ENCODE measurements at regions of chr1 and their contacts with region 1.

Region 1: DNA sequence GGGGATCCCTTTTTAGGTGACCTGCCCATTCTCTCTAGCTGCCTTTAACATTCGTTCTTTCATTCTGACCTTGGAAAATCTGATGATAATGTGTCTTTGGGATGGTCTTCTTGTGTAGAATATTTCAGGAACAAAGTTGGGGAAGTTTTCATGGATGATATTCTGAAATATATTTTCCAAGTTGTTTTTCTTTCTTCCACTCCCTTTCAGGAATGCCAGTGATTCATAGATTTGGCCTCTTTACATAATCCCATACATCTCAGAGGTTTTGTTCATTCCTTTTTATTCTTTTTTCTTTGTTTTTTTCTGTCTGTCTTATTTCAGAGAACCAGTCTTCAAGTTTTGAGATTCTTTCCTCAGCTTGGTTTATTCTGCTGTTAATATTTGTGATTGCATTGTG is 13.9 kb upstream of the SCMH1 start:
- DNase-seq: no peak
- ATAC-seq: no peak
- H3K4me3 ChIP-seq: no peak overlapping the region
- H3K27ac ChIP-seq: peak overlapping the region in 1 of 2 experiments; percentile 31; a peak in 1 of 6 replicates
- H3K4me1 ChIP-seq: 0 out of 3 replicates have a peak, but pooled peaks cover 6% of the 10 kb centered on the region
- CTCF ChIP-seq: no peak
- EP300 ChIP-seq: no peak
- POLR2A ChIP-seq: no peak
- RAD21 ChIP-seq: no peak

Region 2: DNA sequence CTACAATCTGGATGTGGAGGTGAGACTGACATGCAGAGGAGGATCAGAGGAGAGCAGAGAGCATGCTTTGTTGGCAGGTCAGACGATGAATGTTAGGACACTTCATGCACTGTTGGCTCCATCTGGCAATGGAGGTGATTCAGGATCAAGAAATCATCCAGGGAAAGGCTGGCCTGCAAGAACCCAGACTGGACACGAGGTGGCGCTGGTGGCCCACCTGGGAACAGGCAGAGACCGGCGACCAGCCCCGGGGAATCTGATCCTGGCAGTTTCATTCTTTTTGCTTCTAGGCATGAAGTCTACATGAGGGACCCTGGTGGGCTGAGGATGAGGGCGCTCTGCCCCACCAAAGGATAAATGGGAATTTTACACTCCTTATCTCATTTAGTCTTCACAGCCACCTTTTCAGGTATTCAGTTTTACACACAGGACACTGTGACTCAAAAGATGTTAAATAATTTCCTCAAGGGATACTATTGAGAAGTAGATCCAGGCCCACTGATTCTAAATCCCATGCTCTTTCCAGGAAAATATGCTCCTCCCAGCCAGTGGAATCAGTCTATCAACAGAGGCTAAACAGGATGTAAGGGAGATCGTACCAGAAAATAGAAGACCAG is 12.3 kb after region 1 on chr1:
- CTCF ChIA-PET with region 1: interaction called, 12 read pairs
- POLR2A ChIA-PET with region 1: no interaction called
- DNase-seq: peak; percentile 64 to 77
- ATAC-seq: peak; percentile 67 to 94
- H3K4me3 ChIP-seq: no peak overlapping the region
- H3K27ac ChIP-seq: peak overlapping the region; percentile 34 to 48; a peak in 2 of 6 replicates
- H3K4me1 ChIP-seq: peaks cover 3% of the 10 kb centered on the region; the same call in 1 of the 3 replicates
- CTCF ChIP-seq: peak; percentile 84
- EP300 ChIP-seq: no peak
- POLR2A ChIP-seq: no peak
- RAD21 ChIP-seq: peak; percentile 90 to 91

Region 3: GRCh38 chr1:41427536-41428287 is 171.7 kb after region 1 on chr1:
- CTCF ChIA-PET with region 1: no interaction called
- POLR2A ChIA-PET with region 1: no interaction called
- DNase-seq: no peak
- ATAC-seq: no peak
- H3K4me3 ChIP-seq: no peak overlapping the region
- H3K27ac ChIP-seq: no peak overlapping the region
- H3K4me1 ChIP-seq: peaks cover 11% of the 10 kb centered on the region
- CTCF ChIP-seq: no peak
- EP300 ChIP-seq: no peak
- POLR2A ChIP-seq: no peak
- RAD21 ChIP-seq: no peak

Region 4: DNA sequence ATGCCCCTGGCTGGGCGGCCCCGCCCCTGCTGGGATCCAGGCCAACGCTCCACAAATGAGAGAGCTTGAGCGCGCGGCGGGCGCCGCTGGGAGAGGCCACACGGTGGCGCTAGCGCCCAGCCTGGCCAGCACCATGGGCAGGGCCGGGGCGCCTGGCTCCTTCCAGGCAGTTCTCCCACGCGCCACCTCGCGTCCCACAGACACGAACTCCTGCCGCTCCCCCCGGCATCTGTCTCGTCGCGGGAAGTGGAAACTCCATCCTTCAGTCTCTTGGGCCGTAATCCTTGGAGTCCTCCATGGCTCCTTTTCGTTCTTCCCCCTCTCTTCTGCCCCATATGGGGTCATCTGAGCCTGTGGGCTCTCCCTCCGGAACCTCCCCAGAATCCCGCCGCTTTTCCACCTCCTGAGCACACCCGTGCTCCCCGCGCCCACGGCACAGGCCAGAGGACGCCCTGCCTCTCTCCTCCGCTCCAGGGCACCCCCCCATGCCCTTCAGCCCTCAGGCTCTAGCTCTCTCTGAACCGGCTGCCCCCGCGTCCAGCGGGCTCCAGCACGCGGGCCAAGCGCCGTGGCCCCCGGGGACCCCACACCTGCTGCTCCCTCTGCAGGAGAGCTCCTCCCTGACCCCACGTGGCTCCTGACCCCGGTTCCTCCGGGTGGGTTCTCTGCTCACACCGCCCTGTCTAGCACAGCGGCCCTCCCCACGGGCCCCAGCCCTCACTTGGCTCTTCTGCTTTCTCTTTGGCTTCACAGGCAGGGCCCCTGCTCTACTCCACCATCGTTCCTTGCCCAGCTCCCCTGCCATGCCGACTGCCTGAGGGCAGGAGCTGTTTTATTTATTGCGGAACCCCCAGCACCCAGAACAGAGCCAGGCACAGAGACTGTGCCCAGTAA is 260.4 kb after region 1 on chr1:
- CTCF ChIA-PET with region 1: no interaction called
- POLR2A ChIA-PET with region 1: no interaction called
- DNase-seq: peak; percentile 68 to 76
- ATAC-seq: peak; percentile 90 to 98
- H3K4me3 ChIP-seq: peak overlapping the region; percentile 40; the same call in 2 of the 3 replicates
- H3K27ac ChIP-seq: peak overlapping the region; percentile 79 to 85
- H3K4me1 ChIP-seq: peaks cover 12% of the 10 kb centered on the region
- CTCF ChIP-seq: peak; percentile 75
- EP300 ChIP-seq: no peak
- POLR2A ChIP-seq: no peak
- RAD21 ChIP-seq: peak; percentile 46 to 65; a peak in 4 of 5 replicates

Measured in A549 (cell line).